ENCODE measurements at regions of chr5 and their contacts with region 1.

Region 1: GRCh38 chr5:3201941-3202340 is 393.7 kb upstream of the IRX1 start:
- DNase-seq: no peak
- H3K4me3 ChIP-seq: no peak overlapping the region
- H3K27ac ChIP-seq: no peak overlapping the region
- H3K4me1 ChIP-seq: no peaks in the 10 kb centered on the region
- H3K27me3 ChIP-seq: peaks cover 94% of the 10 kb centered on the region
- CTCF ChIP-seq: no peak

Region 2: GRCh38 chr5:3980156-3980555 is 778.2 kb after region 1 on chr5:
- CTCF ChIA-PET with region 1: no interaction called
- POLR2A ChIA-PET with region 1: interaction called, 13 read pairs
- intact Hi-C with region 1: no loop called
- DNase-seq: no peak
- H3K4me3 ChIP-seq: no peak overlapping the region
- H3K27ac ChIP-seq: no peak overlapping the region
- H3K4me1 ChIP-seq: no peaks in the 10 kb centered on the region
- H3K27me3 ChIP-seq: peaks cover 20% of the 10 kb centered on the region; the same call in 1 of the 2 replicates
- CTCF ChIP-seq: no peak